CD8-positive, alpha-beta memory T cell (primary cell): ENCODE measurements at regions of chr11 and their contacts with region 1.

Region 1: GRCh38 chr11:57493507-57494503 is 21.7 kb downstream of the SLC43A1 start:
- DNase-seq: peak; percentile 61 to 83 (median 66)
- H3K4me3 ChIP-seq: no peak overlapping the region
- H3K4me3 Mint-ChIP-seq: no peak overlapping the region
- H3K27ac ChIP-seq: no peak overlapping the region
- H3K27ac Mint-ChIP-seq: no peak overlapping the region
- H3K4me1 ChIP-seq: no peaks in the 10 kb centered on the region
- H3K4me1 Mint-ChIP-seq: no peaks in the 10 kb centered on the region
- H3K27me3 ChIP-seq: no peaks in the 10 kb centered on the region
- H3K27me3 Mint-ChIP-seq: no peaks in the 10 kb centered on the region

Region 2: GRCh38 chr11:57237204-57237681 is 256.6 kb before region 1 on chr11 and contains the start of gene APLNR:
- CTCF ChIA-PET with region 1: no interaction called
- POLR2A ChIA-PET with region 1: no interaction called
- DNase-seq: no peak
- H3K4me3 ChIP-seq: no peak within 1 kb of the TSS
- H3K4me3 Mint-ChIP-seq: peak within 1 kb of the TSS in 1 of 7 donors; percentile 37
- H3K27ac ChIP-seq: no peak within 1 kb of the TSS
- H3K27ac Mint-ChIP-seq: no peak within 1 kb of the TSS
- H3K4me1 ChIP-seq: no peaks in the 10 kb centered on the region
- H3K4me1 Mint-ChIP-seq: peaks cover 0 to 10% (median 4%) of the 10 kb centered on the region in 3 donors
- H3K27me3 ChIP-seq: no peaks in the 10 kb centered on the region
- H3K27me3 Mint-ChIP-seq: peaks cover 41 to 86% of the 10 kb centered on the region in 2 donors
- total RNA-seq, gene APLNR: not detected

Region 3: DNA sequence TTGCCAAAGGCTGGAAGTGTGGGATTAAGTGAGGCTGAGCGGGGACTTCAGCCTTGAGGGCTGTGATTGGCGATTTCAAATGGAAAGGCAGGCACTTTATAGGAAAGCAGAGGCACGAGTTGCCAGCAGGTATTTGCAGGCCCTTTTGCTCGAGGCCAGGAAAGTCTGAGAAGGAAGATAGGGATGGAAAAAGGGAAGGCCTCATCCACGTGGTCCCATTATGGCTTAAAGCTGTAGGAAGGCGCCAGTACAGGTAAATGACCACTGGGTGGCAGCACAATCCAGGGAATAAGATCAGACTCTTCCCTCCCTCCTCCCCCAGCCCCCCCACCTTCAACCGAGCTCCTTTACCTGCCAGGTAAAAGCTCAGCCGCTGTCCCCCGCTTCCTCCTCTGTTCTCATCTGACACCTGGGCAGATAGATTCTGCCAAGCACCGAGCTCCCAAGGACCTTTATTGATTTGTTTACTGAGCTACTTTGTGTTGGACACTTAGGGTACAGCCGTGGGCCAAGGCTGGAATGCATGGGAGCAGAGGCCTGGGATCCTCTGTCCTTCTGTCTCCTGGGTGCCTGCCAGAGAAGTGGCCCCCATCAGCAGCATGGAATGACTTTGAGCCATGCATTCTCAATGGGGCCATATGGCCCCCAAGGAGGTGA is 148.1 kb before region 1 on chr11:
- CTCF ChIA-PET with region 1: interaction called, 15 read pairs
- POLR2A ChIA-PET with region 1: no interaction called
- DNase-seq: peak; percentile 50 to 76 (median 62)
- H3K4me3 ChIP-seq: no peak overlapping the region
- H3K4me3 Mint-ChIP-seq: no peak overlapping the region
- H3K27ac ChIP-seq: no peak overlapping the region
- H3K27ac Mint-ChIP-seq: no peak overlapping the region
- H3K4me1 ChIP-seq: no peaks in the 10 kb centered on the region
- H3K4me1 Mint-ChIP-seq: peaks cover 0 to 5% (median 3%) of the 10 kb centered on the region in 3 donors
- H3K27me3 ChIP-seq: no peaks in the 10 kb centered on the region
- H3K27me3 Mint-ChIP-seq: peaks cover 0 to 4% of the 10 kb centered on the region in 2 donors

Region 4: GRCh38 chr11:57387289-57388030 is 106.3 kb before region 1 on chr11:
- CTCF ChIA-PET with region 1: no interaction called
- POLR2A ChIA-PET with region 1: no interaction called
- DNase-seq: no peak
- H3K4me3 ChIP-seq: no peak overlapping the region
- H3K4me3 Mint-ChIP-seq: no peak overlapping the region
- H3K27ac ChIP-seq: no peak overlapping the region
- H3K27ac Mint-ChIP-seq: no peak overlapping the region
- H3K4me1 ChIP-seq: no peaks in the 10 kb centered on the region
- H3K4me1 Mint-ChIP-seq: no peaks in the 10 kb centered on the region
- H3K27me3 ChIP-seq: no peaks in the 10 kb centered on the region
- H3K27me3 Mint-ChIP-seq: peaks cover 0 to 11% of the 10 kb centered on the region in 2 donors

Region 5: GRCh38 chr11:57419146-57419545 is 74.7 kb before region 1 on chr11:
- CTCF ChIA-PET with region 1: no interaction called
- POLR2A ChIA-PET with region 1: no interaction called
- DNase-seq: no peak
- H3K4me3 ChIP-seq: no peak overlapping the region
- H3K4me3 Mint-ChIP-seq: no peak overlapping the region
- H3K27ac ChIP-seq: no peak overlapping the region
- H3K27ac Mint-ChIP-seq: peak overlapping the region in 1 of 8 donors; percentile 23
- H3K4me1 ChIP-seq: peaks cover 6% of the 10 kb centered on the region
- H3K4me1 Mint-ChIP-seq: peaks cover 20 to 39% (median 34%) of the 10 kb centered on the region in 3 donors
- H3K27me3 ChIP-seq: no peaks in the 10 kb centered on the region
- H3K27me3 Mint-ChIP-seq: no peaks in the 10 kb centered on the region

Region 6: GRCh38 chr11:57480409-57481137 is 13.2 kb before region 1 on chr11:
- CTCF ChIA-PET with region 1: interaction called, 29 read pairs
- POLR2A ChIA-PET with region 1: no interaction called
- DNase-seq: peak in 4 of 5 donors; percentile 34 to 71 (median 45)
- H3K4me3 ChIP-seq: no peak overlapping the region
- H3K4me3 Mint-ChIP-seq: peak overlapping the region in 2 of 7 donors; percentile 4 to 8
- H3K27ac ChIP-seq: no peak overlapping the region
- H3K27ac Mint-ChIP-seq: peak overlapping the region in 3 of 8 donors; percentile 2 to 50 (median 3)
- H3K4me1 ChIP-seq: peaks cover 7% of the 10 kb centered on the region
- H3K4me1 Mint-ChIP-seq: peaks cover 10 to 37% (median 16%) of the 10 kb centered on the region in 3 donors
- H3K27me3 ChIP-seq: no peaks in the 10 kb centered on the region
- H3K27me3 Mint-ChIP-seq: peaks cover 11 to 13% of the 10 kb centered on the region in 2 donors

Region 7: GRCh38 chr11:57515332-57516060 is 21.7 kb after region 1 on chr11 and contains the start of gene SLC43A1:
- CTCF ChIA-PET with region 1: interaction called, 498 read pairs
- POLR2A ChIA-PET with region 1: interaction called, 4 read pairs
- DNase-seq: peak in 1 of 5 donors; percentile 21
- H3K4me3 ChIP-seq: peak within 1 kb of the TSS; percentile 86
- H3K4me3 Mint-ChIP-seq: peak within 1 kb of the TSS; percentile 97 to 99 (median 98)
- H3K27ac ChIP-seq: peak within 1 kb of the TSS; percentile 61
- H3K27ac Mint-ChIP-seq: peak within 1 kb of the TSS; percentile 79 to 95 (median 90)
- H3K4me1 ChIP-seq: peaks cover 18% of the 10 kb centered on the region
- H3K4me1 Mint-ChIP-seq: peaks cover 24 to 36% (median 32%) of the 10 kb centered on the region in 3 donors
- H3K27me3 ChIP-seq: no peaks in the 10 kb centered on the region
- H3K27me3 Mint-ChIP-seq: peaks cover 0 to 3% of the 10 kb centered on the region in 2 donors
- total RNA-seq, gene SLC43A1: 24.2 to 25.3 TPM

Region 8: GRCh38 chr11:57597916-57598830 is 104.4 kb after region 1 on chr11:
- CTCF ChIA-PET with region 1: no interaction called
- POLR2A ChIA-PET with region 1: no interaction called
- DNase-seq: no peak
- H3K4me3 ChIP-seq: no peak overlapping the region
- H3K4me3 Mint-ChIP-seq: peak overlapping the region in 1 of 7 donors; percentile 54
- H3K27ac ChIP-seq: no peak overlapping the region
- H3K27ac Mint-ChIP-seq: no peak overlapping the region
- H3K4me1 ChIP-seq: no peaks in the 10 kb centered on the region
- H3K4me1 Mint-ChIP-seq: peaks cover 0 to 3% (median 0%) of the 10 kb centered on the region in 3 donors
- H3K27me3 ChIP-seq: peaks cover 14% of the 10 kb centered on the region
- H3K27me3 Mint-ChIP-seq: peaks cover 35 to 54% of the 10 kb centered on the region in 2 donors

Region 9: GRCh38 chr11:57644748-57645688 is 151.2 kb after region 1 on chr11:
- CTCF ChIA-PET with region 1: interaction called, 67 read pairs
- POLR2A ChIA-PET with region 1: no interaction called
- DNase-seq: peak; percentile 74 to 89 (median 78)
- H3K4me3 ChIP-seq: no peak overlapping the region
- H3K4me3 Mint-ChIP-seq: peak overlapping the region in 1 of 7 donors; percentile 53
- H3K27ac ChIP-seq: no peak overlapping the region
- H3K27ac Mint-ChIP-seq: peak overlapping the region in 3 of 8 donors; percentile 31 to 61 (median 54)
- H3K4me1 ChIP-seq: peaks cover 12% of the 10 kb centered on the region
- H3K4me1 Mint-ChIP-seq: peaks cover 20 to 42% (median 25%) of the 10 kb centered on the region in 3 donors
- H3K27me3 ChIP-seq: peaks cover 34% of the 10 kb centered on the region
- H3K27me3 Mint-ChIP-seq: peaks cover 38 to 54% of the 10 kb centered on the region in 2 donors